GM12878 (cell line): ENCODE measurements at regions of chr16 and their contacts with region 1.

Region 1: DNA sequence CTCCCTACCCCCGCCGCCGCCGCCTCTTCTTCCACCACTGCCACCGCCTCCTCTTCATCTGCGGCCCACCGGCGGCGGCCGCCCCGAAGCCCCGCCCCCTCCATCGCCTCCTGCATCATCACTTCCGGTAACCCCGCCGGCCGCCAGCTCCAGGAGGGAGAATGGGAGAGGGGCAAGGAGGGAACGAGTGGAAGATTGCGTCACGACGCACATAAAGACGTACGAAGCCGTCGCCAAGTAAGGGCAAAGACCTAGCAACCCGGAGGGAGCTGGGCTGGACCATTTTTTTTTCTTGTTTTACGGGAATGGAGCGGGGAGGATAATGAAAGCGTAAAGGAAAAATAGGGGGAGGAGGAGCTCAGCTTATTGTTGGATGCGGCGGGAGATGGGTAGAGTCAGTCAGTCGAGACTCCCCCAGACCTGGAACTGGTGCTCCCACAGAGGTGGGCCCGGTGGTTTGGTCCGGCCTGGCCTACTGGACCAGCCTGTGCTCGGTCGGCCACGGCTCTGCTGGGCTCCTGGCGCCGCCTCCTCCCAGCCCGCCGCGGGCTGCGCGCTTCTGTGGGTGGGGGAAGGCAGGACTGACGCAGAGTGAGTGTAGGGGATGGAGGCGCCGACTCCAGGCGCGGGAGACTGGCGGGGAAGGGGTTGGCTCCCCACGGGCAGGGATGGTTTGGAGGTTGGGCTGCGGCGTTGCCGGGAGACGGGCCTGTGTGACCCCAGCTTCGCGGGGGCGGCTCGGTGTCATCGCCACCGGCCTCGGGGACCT is at the starts of genes DCUN1D3 and LYRM1:
- DNase-seq: peak; percentile 87
- ATAC-seq: peak; percentile 89
- H3K4me3 ChIP-seq: peak within 1 kb of the TSS; percentile 82
- H3K27ac ChIP-seq: peak within 1 kb of the TSS; percentile 96
- H3K4me1 ChIP-seq: peaks cover 22% of the 10 kb centered on the region
- H3K27me3 ChIP-seq: no peaks in the 10 kb centered on the region
- CTCF ChIP-seq: no peak
- EP300 ChIP-seq: 0 out of 4 replicates have a peak, but pooled peaks of 1 of the 2 experiments have one; percentile 24
- POLR2A ChIP-seq: peak; percentile 88
- RAD21 ChIP-seq: no peak
- polyA plus RNA-seq, gene DCUN1D3: 0.47 to 1.2 TPM
- polyA plus RNA-seq, gene LYRM1: 36.9 to 43.7 TPM

Region 2: GRCh38 chr16:20647736-20648135 is 252.7 kb before region 1 on chr16:
- CTCF ChIA-PET with region 1: no interaction called
- POLR2A ChIA-PET with region 1: no interaction called
- RAD21 ChIA-PET with region 1: no interaction called
- SMC1A ChIA-PET with region 1: no interaction called
- in situ Hi-C with region 1: no loop called
- intact Hi-C with region 1: no loop called
- DNase-seq: no peak
- ATAC-seq: no peak
- H3K4me3 ChIP-seq: no peak overlapping the region
- H3K27ac ChIP-seq: no peak overlapping the region
- H3K4me1 ChIP-seq: no peaks in the 10 kb centered on the region
- H3K27me3 ChIP-seq: no peaks in the 10 kb centered on the region
- CTCF ChIP-seq: no peak
- EP300 ChIP-seq: no peak
- POLR2A ChIP-seq: no peak
- RAD21 ChIP-seq: no peak

Region 3: GRCh38 chr16:20806168-20807050 is 94.1 kb before region 1 on chr16 and contains the starts of genes ERI2 and REXO5:
- CTCF ChIA-PET with region 1: interaction called, 5 read pairs
- POLR2A ChIA-PET with region 1: interaction called, 5 read pairs
- RAD21 ChIA-PET with region 1: interaction called, 9 read pairs
- SMC1A ChIA-PET with region 1: interaction called, 3 read pairs
- in situ Hi-C with region 1: no loop called
- intact Hi-C with region 1: loop called (anchors 2 kb)
- DNase-seq: peak; percentile 59
- ATAC-seq: peak; percentile 92
- H3K4me3 ChIP-seq: peak within 1 kb of the TSS; percentile 88
- H3K27ac ChIP-seq: peak within 1 kb of the TSS; percentile 94
- H3K4me1 ChIP-seq: peaks cover 7% of the 10 kb centered on the region
- H3K27me3 ChIP-seq: no peaks in the 10 kb centered on the region
- CTCF ChIP-seq: peak; percentile 41 to 57 (median 56); a peak in 5 of 6 replicates
- EP300 ChIP-seq: no peak
- POLR2A ChIP-seq: peak; percentile 76
- RAD21 ChIP-seq: no peak
- polyA plus RNA-seq, gene ERI2: 7.7 to 7.8 TPM
- polyA plus RNA-seq, gene REXO5: 3.8 to 4.1 TPM

Region 4: GRCh38 chr16:20866145-20866772 is 34.2 kb before region 1 on chr16:
- CTCF ChIA-PET with region 1: interaction called, 6 read pairs
- POLR2A ChIA-PET with region 1: interaction called, 12 read pairs
- RAD21 ChIA-PET with region 1: interaction called, 31 read pairs
- SMC1A ChIA-PET with region 1: interaction called, 42 read pairs
- in situ Hi-C with region 1: no loop called
- intact Hi-C with region 1: no loop called
- DNase-seq: no peak
- ATAC-seq: peak; percentile 44
- H3K4me3 ChIP-seq: no peak overlapping the region
- H3K27ac ChIP-seq: peak overlapping the region; percentile 98
- H3K4me1 ChIP-seq: peaks cover 28% of the 10 kb centered on the region
- H3K27me3 ChIP-seq: no peaks in the 10 kb centered on the region
- CTCF ChIP-seq: no peak
- EP300 ChIP-seq: peak in 1 of 2 experiments; percentile 8; a peak in 1 of 4 replicates
- POLR2A ChIP-seq: no peak
- RAD21 ChIP-seq: no peak

Region 5: GRCh38 chr16:20874088-20874581 is 26.3 kb before region 1 on chr16:
- CTCF ChIA-PET with region 1: interaction called, 36 read pairs
- POLR2A ChIA-PET with region 1: interaction called, 27 read pairs
- RAD21 ChIA-PET with region 1: interaction called, 27 read pairs
- SMC1A ChIA-PET with region 1: interaction called, 36 read pairs
- in situ Hi-C with region 1: no loop called
- intact Hi-C with region 1: loop called (anchors 2 kb)
- DNase-seq: no peak
- ATAC-seq: peak; percentile 9
- H3K4me3 ChIP-seq: peak overlapping the region; percentile 34; the same call in 1 of the 2 replicates
- H3K27ac ChIP-seq: peak overlapping the region; percentile 81
- H3K4me1 ChIP-seq: peaks cover 45% of the 10 kb centered on the region
- H3K27me3 ChIP-seq: no peaks in the 10 kb centered on the region
- CTCF ChIP-seq: no peak
- EP300 ChIP-seq: no peak
- POLR2A ChIP-seq: no peak
- RAD21 ChIP-seq: no peak

Region 6: GRCh38 chr16:20879175-20880040 is 21.1 kb before region 1 on chr16:
- CTCF ChIA-PET with region 1: interaction called, 36 read pairs
- POLR2A ChIA-PET with region 1: interaction called, 27 read pairs
- RAD21 ChIA-PET with region 1: interaction called, 27 read pairs
- SMC1A ChIA-PET with region 1: interaction called, 36 read pairs
- in situ Hi-C with region 1: no loop called
- intact Hi-C with region 1: loop called (anchors 2 kb)
- DNase-seq: peak; percentile 71
- ATAC-seq: peak; percentile 70
- H3K4me3 ChIP-seq: peak overlapping the region; percentile 17; the same call in 1 of the 2 replicates
- H3K27ac ChIP-seq: peak overlapping the region; percentile 60
- H3K4me1 ChIP-seq: peaks cover 32% of the 10 kb centered on the region
- H3K27me3 ChIP-seq: no peaks in the 10 kb centered on the region
- CTCF ChIP-seq: no peak
- EP300 ChIP-seq: 0 out of 4 replicates have a peak, but pooled peaks have one; percentile 4 to 50
- POLR2A ChIP-seq: no peak
- RAD21 ChIP-seq: no peak

Region 7: GRCh38 chr16:20944861-20945574 is 44.5 kb after region 1 on chr16:
- CTCF ChIA-PET with region 1: interaction called, 3 read pairs
- POLR2A ChIA-PET with region 1: no interaction called
- RAD21 ChIA-PET with region 1: no interaction called
- SMC1A ChIA-PET with region 1: no interaction called
- in situ Hi-C with region 1: loop called (anchors 5 kb)
- intact Hi-C with region 1: no loop called
- DNase-seq: no peak
- ATAC-seq: peak; percentile 72
- H3K4me3 ChIP-seq: no peak overlapping the region
- H3K27ac ChIP-seq: no peak overlapping the region
- H3K4me1 ChIP-seq: peaks cover 17% of the 10 kb centered on the region
- H3K27me3 ChIP-seq: no peaks in the 10 kb centered on the region; a peak in 2 of 4 replicates
- CTCF ChIP-seq: peak in 2 of 3 experiments; percentile 22 to 33; a peak in 2 of 6 replicates
- EP300 ChIP-seq: no peak
- POLR2A ChIP-seq: no peak
- RAD21 ChIP-seq: peak; percentile 60